GM13977 (cell line): ENCODE measurements at regions of chr12 and their contacts with region 1.

Region 1: GRCh38 chr12:29207120-29207519 is 58.0 kb downstream of the FAR2 start:
- DNase-seq: no peak
- CTCF ChIP-seq: no peak

Region 2: GRCh38 chr12:28937196-28937595 is 269.9 kb before region 1 on chr12:
- in situ Hi-C with region 1: no loop called
- DNase-seq: no peak
- CTCF ChIP-seq: no peak

Region 3: DNA sequence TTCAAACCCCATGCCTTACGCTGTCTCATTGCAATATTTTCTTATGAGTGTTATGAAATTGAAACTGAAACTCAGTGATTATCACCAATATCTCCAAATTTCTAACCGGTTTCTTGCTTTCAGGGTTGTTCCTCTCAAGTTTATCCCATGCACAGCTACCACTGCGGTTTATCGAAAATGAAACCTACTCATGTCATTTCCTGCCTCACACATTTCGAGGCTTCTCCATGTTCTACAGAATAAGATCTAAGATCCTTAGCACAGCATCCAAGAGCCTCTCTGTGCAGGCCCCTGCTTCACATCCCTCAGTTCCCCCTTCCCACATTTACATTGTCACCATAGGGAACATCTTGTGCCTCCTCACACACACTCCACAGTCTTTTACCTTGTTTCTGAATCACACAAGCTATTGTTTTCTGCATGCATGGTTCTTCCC is 103.6 kb before region 1 on chr12:
- in situ Hi-C with region 1: loop called (anchors 25 kb)
- DNase-seq: peak; percentile 45
- CTCF ChIP-seq: no peak